IMR-90 (cell line): ENCODE measurements at regions of chr11 and their contacts with region 1.

Region 1: DNA sequence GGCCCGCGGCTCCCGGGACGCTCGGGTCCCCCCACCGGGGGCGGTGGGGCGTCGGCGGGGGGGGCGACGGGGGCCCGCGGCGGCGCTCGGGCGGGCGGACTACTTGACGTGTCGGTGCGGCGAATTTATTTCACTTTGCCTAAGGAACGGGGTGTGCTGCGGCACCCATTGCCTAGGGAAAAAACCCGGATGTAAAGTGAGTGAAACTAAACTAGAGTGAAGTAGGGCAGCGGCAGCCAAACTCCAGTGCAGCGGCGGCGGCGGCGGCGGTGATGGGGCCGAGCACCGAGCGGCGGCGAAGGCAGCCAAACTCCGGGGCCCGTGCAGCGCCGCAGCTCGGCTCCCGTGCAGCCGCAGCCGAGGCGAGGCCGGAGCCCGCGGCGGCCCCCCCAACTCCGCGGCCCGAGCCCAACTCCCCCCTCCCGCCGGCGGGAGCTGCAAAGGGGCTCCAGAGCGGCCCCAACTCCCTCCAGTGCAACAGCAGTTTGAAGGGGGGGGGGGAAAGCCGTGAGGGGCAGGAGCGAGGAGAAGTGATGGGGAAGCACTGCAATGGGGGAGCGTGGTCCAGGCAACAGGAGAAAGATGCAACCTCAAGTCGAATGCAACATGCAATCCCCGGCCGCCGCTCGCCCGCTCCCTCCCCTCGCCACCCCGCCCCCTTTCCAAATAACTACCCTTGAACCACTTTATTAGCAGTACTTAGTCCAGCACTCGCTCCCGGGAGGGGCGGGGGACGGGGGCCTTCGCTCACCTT is 647 bp upstream of the PHF21A start:
- DNase-seq: peak; percentile 95
- ATAC-seq: peak; percentile 62
- H3K4me3 ChIP-seq: peak overlapping the region; percentile 68
- H3K27ac ChIP-seq: peak overlapping the region; percentile 79
- H3K4me1 ChIP-seq: no peaks in the 10 kb centered on the region
- H3K27me3 ChIP-seq: no peaks in the 10 kb centered on the region
- CTCF ChIP-seq: no peak
- POLR2A ChIP-seq: no peak
- RAD21 ChIP-seq: no peak

Region 2: GRCh38 chr11:46006418-46007070 is 115.4 kb before region 1 on chr11:
- CTCF ChIA-PET with region 1: interaction called, 3 read pairs
- POLR2A ChIA-PET with region 1: no interaction called
- dilution Hi-C with region 1: no loop called
- in situ Hi-C with region 1: no loop called
- intact Hi-C with region 1: loop called (anchors 5 kb)
- DNase-seq: peak; percentile 84
- ATAC-seq: peak; percentile 84
- H3K4me3 ChIP-seq: no peak overlapping the region
- H3K27ac ChIP-seq: no peak overlapping the region
- H3K4me1 ChIP-seq: peaks cover 5% of the 10 kb centered on the region; the same call in 1 of the 2 replicates
- H3K27me3 ChIP-seq: no peaks in the 10 kb centered on the region
- CTCF ChIP-seq: peak; percentile 87
- POLR2A ChIP-seq: no peak
- RAD21 ChIP-seq: peak; percentile 87

Region 3: DNA sequence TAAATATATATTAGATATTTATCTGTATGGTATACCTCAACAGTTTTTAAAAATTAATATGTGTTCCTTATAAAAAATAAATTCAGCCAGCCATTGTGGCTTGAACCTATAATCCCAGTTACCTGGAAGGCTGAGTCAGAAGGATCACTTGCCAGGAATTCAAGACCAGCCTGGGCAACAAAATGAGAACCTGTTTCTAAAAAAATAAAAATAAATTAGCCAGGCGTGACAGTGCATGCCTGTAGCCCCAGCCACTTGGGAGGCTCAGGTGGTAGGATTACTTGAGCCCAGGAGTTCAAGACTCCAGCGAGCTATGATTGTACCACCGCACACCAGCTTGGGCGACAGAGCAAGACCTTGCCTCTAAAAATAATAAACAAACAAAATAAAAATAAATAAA is 55.6 kb before region 1 on chr11:
- CTCF ChIA-PET with region 1: no interaction called
- POLR2A ChIA-PET with region 1: interaction called, 14 read pairs
- dilution Hi-C with region 1: no loop called
- in situ Hi-C with region 1: no loop called
- intact Hi-C with region 1: no loop called
- DNase-seq: no peak
- ATAC-seq: no peak
- H3K4me3 ChIP-seq: no peak overlapping the region
- H3K27ac ChIP-seq: no peak overlapping the region
- H3K4me1 ChIP-seq: 0 out of 2 replicates have a peak, but pooled peaks cover 2% of the 10 kb centered on the region
- H3K27me3 ChIP-seq: no peaks in the 10 kb centered on the region
- CTCF ChIP-seq: no peak
- POLR2A ChIP-seq: no peak
- RAD21 ChIP-seq: no peak

Region 4: GRCh38 chr11:46238967-46239800 is 117.3 kb after region 1 on chr11:
- CTCF ChIA-PET with region 1: interaction called, 3 read pairs
- POLR2A ChIA-PET with region 1: interaction called, 6 read pairs
- dilution Hi-C with region 1: no loop called
- in situ Hi-C with region 1: no loop called
- intact Hi-C with region 1: loop called (anchors 2 kb)
- DNase-seq: peak; percentile 84
- ATAC-seq: peak; percentile 66
- H3K4me3 ChIP-seq: peak overlapping the region; percentile 41
- H3K27ac ChIP-seq: peak overlapping the region; percentile 84
- H3K4me1 ChIP-seq: peaks cover 29% of the 10 kb centered on the region
- H3K27me3 ChIP-seq: no peaks in the 10 kb centered on the region
- CTCF ChIP-seq: peak; percentile 99
- POLR2A ChIP-seq: 0 out of 2 replicates have a peak, but pooled peaks have one; percentile 6
- RAD21 ChIP-seq: peak; percentile 99

Region 5: DNA sequence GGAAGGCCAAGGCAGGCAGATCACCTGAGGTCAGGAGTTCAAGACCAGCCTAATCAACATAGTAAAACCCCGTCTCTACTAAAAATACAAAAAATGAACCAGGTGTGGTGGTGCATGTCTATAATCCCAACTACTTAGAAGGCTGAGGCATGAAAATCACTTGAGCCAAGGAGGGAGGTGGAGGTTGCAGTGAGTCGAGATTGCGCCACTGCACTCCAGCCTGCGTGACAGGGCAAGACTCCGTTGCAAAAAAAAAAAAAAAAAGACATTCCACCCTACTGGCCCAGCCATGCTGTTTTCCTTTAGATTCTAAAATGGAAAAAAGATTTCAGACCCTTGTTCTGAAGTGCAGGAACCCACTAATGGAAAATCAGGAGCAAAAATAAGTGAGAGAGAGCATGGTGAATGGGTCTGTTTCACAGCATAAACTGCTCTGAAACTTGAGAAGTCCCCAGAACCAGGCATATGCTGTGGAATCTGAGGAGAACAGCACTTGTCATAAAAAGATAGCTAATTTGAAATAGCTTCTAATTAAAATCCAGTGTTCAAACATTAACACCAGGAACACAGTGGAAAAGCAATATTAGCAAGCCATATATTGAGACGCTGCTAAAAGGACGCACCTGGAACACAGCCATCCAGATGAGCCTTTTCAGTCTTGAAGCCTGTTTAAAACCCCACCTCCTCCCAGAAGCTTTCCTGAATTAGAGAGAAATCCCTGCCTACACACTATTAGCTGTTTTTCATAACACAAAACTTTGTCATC is 335.9 kb after region 1 on chr11:
- CTCF ChIA-PET with region 1: no interaction called
- POLR2A ChIA-PET with region 1: no interaction called
- dilution Hi-C with region 1: no loop called
- in situ Hi-C with region 1: no loop called
- intact Hi-C with region 1: no loop called
- DNase-seq: peak; percentile 29
- ATAC-seq: no peak; the same call in 1 of the 2 replicates
- H3K4me3 ChIP-seq: no peak overlapping the region
- H3K27ac ChIP-seq: no peak overlapping the region
- H3K4me1 ChIP-seq: peaks cover 6% of the 10 kb centered on the region; the same call in 1 of the 2 replicates
- H3K27me3 ChIP-seq: no peaks in the 10 kb centered on the region
- CTCF ChIP-seq: no peak
- POLR2A ChIP-seq: no peak
- RAD21 ChIP-seq: no peak